ENCODE measurements at regions of chr9 and their contacts with region 1.

Region 1: GRCh38 chr9:98263482-98264357 is 8.3 kb upstream of the TBC1D2 start:
- DNase-seq: peak; percentile 88
- H3K4me3 Mint-ChIP-seq: no peak overlapping the region
- H3K27ac Mint-ChIP-seq: no peak overlapping the region
- H3K4me1 Mint-ChIP-seq: no peaks in the 10 kb centered on the region
- H3K27me3 Mint-ChIP-seq: peaks cover 25% of the 10 kb centered on the region

Region 2: GRCh38 chr9:98207606-98208005 is 56.1 kb before region 1 on chr9:
- CTCF ChIA-PET with region 1: interaction called, 11 read pairs
- POLR2A ChIA-PET with region 1: interaction called, 4 read pairs
- DNase-seq: no peak
- H3K4me3 Mint-ChIP-seq: no peak overlapping the region
- H3K27ac Mint-ChIP-seq: no peak overlapping the region
- H3K4me1 Mint-ChIP-seq: peaks cover 3% of the 10 kb centered on the region
- H3K27me3 Mint-ChIP-seq: no peaks in the 10 kb centered on the region

Region 3: GRCh38 chr9:98276907-98277469 is 13.3 kb after region 1 on chr9:
- CTCF ChIA-PET with region 1: no interaction called
- POLR2A ChIA-PET with region 1: no interaction called
- DNase-seq: no peak
- H3K4me3 Mint-ChIP-seq: no peak overlapping the region
- H3K27ac Mint-ChIP-seq: no peak overlapping the region
- H3K4me1 Mint-ChIP-seq: no peaks in the 10 kb centered on the region
- H3K27me3 Mint-ChIP-seq: peaks cover 51% of the 10 kb centered on the region